Mammary epithelial cell (primary cell): ENCODE measurements at regions of chr18 and their contacts with region 1.

Region 1: GRCh38 chr18:8559612-8560186 is 49.5 kb upstream of the RAB12 start:
- DNase-seq: peak; percentile 11
- H3K4me3 ChIP-seq: no peak overlapping the region
- H3K27ac ChIP-seq: no peak overlapping the region
- H3K4me1 ChIP-seq: no peaks in the 10 kb centered on the region
- H3K27me3 ChIP-seq: no peaks in the 10 kb centered on the region
- CTCF ChIP-seq: no peak

Region 2: DNA sequence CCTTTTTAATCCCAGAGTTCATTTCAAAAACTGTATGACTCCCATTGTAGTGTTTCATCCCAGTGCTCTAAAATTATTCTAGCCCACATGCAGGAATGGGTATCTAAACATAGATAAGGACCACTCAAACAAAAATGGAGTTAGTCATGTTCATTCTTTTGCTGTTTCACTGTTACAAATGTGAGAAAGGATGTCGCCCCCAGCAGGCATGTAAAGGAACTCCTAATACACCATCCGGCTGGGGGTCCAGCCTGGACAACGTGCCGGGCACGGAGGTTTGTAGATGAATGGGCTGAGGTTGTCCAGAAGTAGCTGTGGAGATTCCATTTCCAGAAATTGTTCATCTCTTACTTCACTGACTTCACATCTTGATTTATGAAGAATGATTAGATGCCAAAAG is 52.3 kb before region 1 on chr18:
- CTCF ChIA-PET with region 1: no interaction called
- dilution Hi-C with region 1: no loop called
- in situ Hi-C with region 1: loop called in 1 of 2 experiments (anchors 10 kb)
- intact Hi-C with region 1: no loop called
- DNase-seq: no peak
- H3K4me3 ChIP-seq: no peak overlapping the region
- H3K27ac ChIP-seq: no peak overlapping the region
- H3K4me1 ChIP-seq: no peaks in the 10 kb centered on the region
- H3K27me3 ChIP-seq: no peaks in the 10 kb centered on the region
- CTCF ChIP-seq: peak in 1 of 2 donors; percentile 16

Region 3: GRCh38 chr18:8571399-8571798 is 11.7 kb after region 1 on chr18:
- CTCF ChIA-PET with region 1: no interaction called
- dilution Hi-C with region 1: no loop called
- in situ Hi-C with region 1: no loop called
- intact Hi-C with region 1: no loop called
- DNase-seq: no peak
- H3K4me3 ChIP-seq: no peak overlapping the region
- H3K27ac ChIP-seq: no peak overlapping the region
- H3K4me1 ChIP-seq: no peaks in the 10 kb centered on the region
- H3K27me3 ChIP-seq: no peaks in the 10 kb centered on the region
- CTCF ChIP-seq: no peak

Region 4: GRCh38 chr18:8608795-8609658 is 49.3 kb after region 1 on chr18 and contains the start of gene RAB12:
- CTCF ChIA-PET with region 1: interaction called, 12 read pairs
- dilution Hi-C with region 1: no loop called
- in situ Hi-C with region 1: no loop called
- intact Hi-C with region 1: no loop called
- DNase-seq: peak; percentile 74
- H3K4me3 ChIP-seq: peak within 1 kb of the TSS; percentile 79 to 91 (median 83)
- H3K27ac ChIP-seq: peak within 1 kb of the TSS; percentile 56
- H3K4me1 ChIP-seq: peaks cover 26% of the 10 kb centered on the region
- H3K27me3 ChIP-seq: no peaks in the 10 kb centered on the region
- CTCF ChIP-seq: peak; percentile 16 to 42
- total RNA-seq, gene RAB12: 36.1 to 47.8 TPM

Region 5: GRCh38 chr18:8623549-8624106 is 63.9 kb after region 1 on chr18:
- CTCF ChIA-PET with region 1: no interaction called
- dilution Hi-C with region 1: no loop called
- in situ Hi-C with region 1: no loop called
- intact Hi-C with region 1: no loop called
- DNase-seq: no peak
- H3K4me3 ChIP-seq: no peak overlapping the region
- H3K27ac ChIP-seq: no peak overlapping the region
- H3K4me1 ChIP-seq: peaks cover 7% of the 10 kb centered on the region
- H3K27me3 ChIP-seq: no peaks in the 10 kb centered on the region
- CTCF ChIP-seq: no peak

Region 6: DNA sequence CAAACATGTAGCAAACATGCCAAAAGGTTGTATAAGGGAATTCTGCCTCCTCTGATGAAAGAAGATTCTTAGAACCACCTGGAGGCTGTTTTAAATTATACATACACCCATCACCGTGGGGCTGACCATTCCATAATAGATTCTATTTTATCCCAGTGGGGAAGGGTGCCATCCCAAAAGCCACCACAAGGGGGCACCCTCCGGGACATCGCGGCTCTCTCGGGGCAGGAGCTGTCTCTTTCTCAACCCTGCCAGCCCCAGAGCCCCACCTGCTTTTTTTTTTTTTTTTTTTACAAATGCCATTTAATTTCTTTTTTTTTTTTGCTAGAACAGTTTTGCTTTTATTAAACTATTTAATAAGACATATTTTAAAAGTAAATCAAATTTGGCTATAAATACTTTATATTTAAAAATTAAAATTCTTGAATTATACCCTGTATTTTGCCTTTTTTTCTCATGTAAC is 137.1 kb after region 1 on chr18:
- CTCF ChIA-PET with region 1: no interaction called
- dilution Hi-C with region 1: no loop called
- in situ Hi-C with region 1: no loop called
- intact Hi-C with region 1: no loop called
- DNase-seq: peak; percentile 48
- H3K4me3 ChIP-seq: no peak overlapping the region
- H3K27ac ChIP-seq: no peak overlapping the region
- H3K4me1 ChIP-seq: peaks cover 4% of the 10 kb centered on the region
- H3K27me3 ChIP-seq: no peaks in the 10 kb centered on the region
- CTCF ChIP-seq: peak; percentile 78 to 87